Motor neuron (in vitro differentiated cells): ENCODE measurements at regions of chr1 and their contacts with region 1.

Region 1: GRCh38 chr1:96187020-96187419 is 534.6 kb upstream of the PTBP2 start:
- ATAC-seq: peak in 2 of 8 experiments; percentile 66 to 70
- H3K4me3 ChIP-seq: no peak overlapping the region
- H3K27ac ChIP-seq: no peak overlapping the region
- H3K4me1 ChIP-seq: peaks cover 0 to 9% of the 10 kb centered on the region in 2 donors

Region 2: DNA sequence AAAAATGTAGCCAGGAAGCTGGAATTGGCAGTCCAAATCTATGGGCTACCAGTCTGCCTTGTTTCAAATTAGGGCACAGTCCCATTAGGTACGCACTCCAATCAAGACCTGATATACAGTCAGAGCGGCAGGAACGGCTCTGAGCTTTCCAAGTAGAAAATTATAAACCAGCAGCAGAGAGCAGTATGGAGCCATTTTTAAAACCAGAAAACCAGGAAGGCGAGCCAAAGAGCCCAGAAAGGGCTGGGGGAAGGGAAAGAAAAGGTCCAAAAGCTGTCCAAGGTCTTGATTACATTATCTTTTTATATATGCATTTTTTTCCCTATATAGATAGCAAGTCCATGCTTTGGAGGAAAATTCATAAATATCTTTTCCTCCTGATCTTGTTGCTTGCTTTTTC is 234.0 kb before region 1 on chr1:
- in situ Hi-C with region 1: loop called in 1 of 9 experiments (anchors 25 kb)
- ATAC-seq: peak; percentile 44 to 86 (median 72)
- H3K4me3 ChIP-seq: no peak overlapping the region
- H3K27ac ChIP-seq: no peak overlapping the region
- H3K4me1 ChIP-seq: peaks cover 10 to 27% of the 10 kb centered on the region in 2 donors

Region 3: GRCh38 chr1:96340686-96341085 is 153.7 kb after region 1 on chr1:
- in situ Hi-C with region 1: no loop called
- ATAC-seq: no peak
- H3K4me3 ChIP-seq: no peak overlapping the region
- H3K27ac ChIP-seq: no peak overlapping the region
- H3K4me1 ChIP-seq: peaks cover 0 to 8% of the 10 kb centered on the region in 2 donors

Region 4: GRCh38 chr1:96362623-96363022 is 175.6 kb after region 1 on chr1:
- in situ Hi-C with region 1: no loop called
- ATAC-seq: peak in 4 of 8 experiments; percentile 41 to 88 (median 70)
- H3K4me3 ChIP-seq: no peak overlapping the region
- H3K27ac ChIP-seq: no peak overlapping the region
- H3K4me1 ChIP-seq: peaks cover 0 to 4% of the 10 kb centered on the region in 2 donors

Region 5: GRCh38 chr1:96588416-96588995 is 401.5 kb after region 1 on chr1:
- in situ Hi-C with region 1: no loop called
- ATAC-seq: no peak
- H3K4me3 ChIP-seq: no peak overlapping the region
- H3K27ac ChIP-seq: no peak overlapping the region
- H3K4me1 ChIP-seq: no peaks in the 10 kb centered on the region